A549 (cell line): ENCODE measurements at regions of chr22 and their contacts with region 1.

Region 1: GRCh38 chr22:31451709-31452571 is 37.7 kb downstream of the EIF4ENIF1 start:
- DNase-seq: peak; percentile 21 to 52
- ATAC-seq: peak; percentile 93 to 94
- H3K4me3 ChIP-seq: no peak overlapping the region
- H3K27ac ChIP-seq: no peak overlapping the region
- H3K4me1 ChIP-seq: no peaks in the 10 kb centered on the region
- CTCF ChIP-seq: peak; percentile 46
- EP300 ChIP-seq: no peak
- POLR2A ChIP-seq: no peak
- RAD21 ChIP-seq: peak in 1 of 2 experiments; percentile 15; a peak in 2 of 5 replicates

Region 2: DNA sequence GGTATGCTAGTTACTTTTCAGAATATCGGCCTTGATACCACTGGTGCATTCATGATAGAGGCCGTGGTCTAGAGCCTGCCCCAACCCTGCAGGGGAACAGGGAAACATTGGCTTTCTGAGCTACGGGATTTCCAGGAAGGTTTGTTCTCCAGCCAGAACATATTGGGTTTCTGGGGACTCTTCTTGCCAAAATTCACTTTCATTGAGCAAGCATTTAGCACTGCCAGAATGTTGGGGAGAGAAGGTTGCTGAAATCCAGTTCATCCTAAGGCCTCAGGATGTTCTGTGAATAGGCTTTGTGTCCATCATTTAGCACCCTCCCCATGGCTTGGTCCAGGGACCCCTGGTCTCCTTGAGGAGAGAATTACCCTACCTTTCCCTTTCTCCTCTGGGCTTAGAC is 15.8 kb before region 1 on chr22:
- CTCF ChIA-PET with region 1: interaction called, 13 read pairs
- POLR2A ChIA-PET with region 1: no interaction called
- DNase-seq: no peak
- ATAC-seq: no peak
- H3K4me3 ChIP-seq: no peak overlapping the region
- H3K27ac ChIP-seq: no peak overlapping the region
- H3K4me1 ChIP-seq: no peaks in the 10 kb centered on the region
- CTCF ChIP-seq: no peak
- EP300 ChIP-seq: no peak
- POLR2A ChIP-seq: no peak
- RAD21 ChIP-seq: no peak